ENCODE measurements at regions of chr7 and their contacts with region 1.

Region 1: GRCh38 chr7:44858161-44858560 is 10.3 kb upstream of the H2AZ2 start:
- DNase-seq: no peak
- H3K4me3 ChIP-seq: no peak overlapping the region
- H3K27ac ChIP-seq: no peak overlapping the region
- H3K4me1 ChIP-seq: no peaks in the 10 kb centered on the region
- H3K27me3 ChIP-seq: no peaks in the 10 kb centered on the region
- CTCF ChIP-seq: peak in 4 of 5 experiments; percentile 13 to 26 (median 22)
- EP300 ChIP-seq: no peak
- POLR2A ChIP-seq: no peak

Region 2: GRCh38 chr7:44801890-44802289 is 56.3 kb before region 1 on chr7:
- in situ Hi-C with region 1: no loop called
- intact Hi-C with region 1: no loop called
- DNase-seq: no peak
- H3K4me3 ChIP-seq: no peak overlapping the region
- H3K27ac ChIP-seq: no peak overlapping the region
- H3K4me1 ChIP-seq: peaks cover 8 to 23% (median 16%) of the 10 kb centered on the region in 4 donors
- H3K27me3 ChIP-seq: no peaks in the 10 kb centered on the region
- CTCF ChIP-seq: no peak
- EP300 ChIP-seq: no peak
- POLR2A ChIP-seq: no peak

Region 3: DNA sequence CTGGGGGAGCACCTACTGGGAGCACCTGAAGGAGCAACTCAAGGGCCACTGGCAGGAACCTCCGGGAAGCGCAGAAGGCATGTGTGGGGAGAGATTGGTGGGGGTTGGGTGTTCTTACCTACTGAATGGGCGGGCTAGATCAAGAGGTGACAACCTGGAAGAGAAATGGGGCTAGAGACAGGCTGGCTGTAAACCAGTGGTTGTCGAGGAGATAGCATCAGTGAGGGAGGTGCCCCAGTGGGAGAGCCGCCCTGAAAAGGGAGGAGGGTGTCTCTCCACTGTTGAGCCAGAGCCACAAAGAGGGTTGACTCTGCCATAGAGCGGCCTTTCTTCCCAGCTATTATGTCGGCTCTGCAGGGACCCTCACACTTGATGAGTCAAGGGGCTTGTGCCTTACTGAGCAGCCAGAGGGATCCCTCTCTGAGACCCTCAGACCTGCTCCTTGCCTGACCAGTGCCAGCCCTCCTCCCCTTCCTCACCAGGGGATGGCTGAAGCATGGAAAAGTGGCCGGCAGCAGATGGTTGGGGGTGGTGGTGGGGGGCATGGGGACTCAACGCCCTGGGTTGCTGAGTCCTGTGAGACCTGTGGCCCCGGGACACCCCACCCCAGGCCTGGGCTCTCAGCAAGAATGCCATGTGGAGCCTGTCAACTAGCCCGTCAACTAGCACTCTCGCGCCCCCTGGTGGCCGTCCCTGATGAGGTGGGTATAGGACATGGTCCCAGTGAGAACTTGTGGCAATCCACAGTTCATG is 63.6 kb after region 1 on chr7:
- in situ Hi-C with region 1: loop called (anchors 5 to 10 kb)
- intact Hi-C with region 1: loop called (anchors 5 kb)
- DNase-seq: peak; percentile 91
- H3K4me3 ChIP-seq: no peak overlapping the region
- H3K27ac ChIP-seq: no peak overlapping the region
- H3K4me1 ChIP-seq: peaks cover 0 to 3% (median 0%) of the 10 kb centered on the region in 4 donors
- H3K27me3 ChIP-seq: no peaks in the 10 kb centered on the region
- CTCF ChIP-seq: peak; percentile 82 to 92 (median 85)
- EP300 ChIP-seq: no peak
- POLR2A ChIP-seq: no peak